ENCODE measurements at regions of chr7 and their contacts with region 1.

Region 1: GRCh38 chr7:130379921-130380860 is at the start of gene CPA1:
- DNase-seq: no peak
- H3K4me3 ChIP-seq: no peak within 1 kb of the TSS
- H3K27ac ChIP-seq: no peak within 1 kb of the TSS
- H3K4me1 ChIP-seq: peaks cover 0 to 2% (median 0%) of the 10 kb centered on the region in 4 experiments; a peak in 1 of 7 replicates
- H3K27me3 ChIP-seq: no peaks in the 10 kb centered on the region; a peak in 1 of 7 replicates
- CTCF ChIP-seq: no peak
- EP300 ChIP-seq: no peak
- POLR2A ChIP-seq: no peak
- RAD21 ChIP-seq: no peak
- total RNA-seq, gene CPA1: not detected in 2 replicates

Region 2: DNA sequence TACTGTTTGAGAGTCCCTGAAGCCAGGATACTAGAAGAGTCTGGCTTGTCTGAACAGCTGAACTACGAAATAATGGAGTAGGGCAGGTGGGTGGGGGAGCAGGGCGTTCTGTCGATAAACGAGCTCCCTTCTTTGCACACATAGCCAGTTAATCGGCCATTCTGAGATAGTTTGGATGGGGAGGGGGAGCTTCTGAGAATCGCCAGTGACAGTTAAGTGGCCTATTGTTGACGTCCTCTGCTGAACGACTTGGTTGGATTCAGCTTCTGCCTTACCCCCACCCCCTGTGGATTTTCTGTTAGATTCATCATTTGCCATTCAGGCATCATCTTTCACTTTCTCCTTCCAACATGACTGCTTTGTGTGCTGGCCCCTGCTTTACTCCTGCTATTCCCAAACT is 35.1 kb before region 1 on chr7:
- CTCF ChIA-PET with region 1: interaction called, 12 read pairs
- POLR2A ChIA-PET with region 1: no interaction called
- DNase-seq: no peak
- H3K4me3 ChIP-seq: peak overlapping the region in 1 of 4 experiments; percentile 10; a peak in 2 of 8 replicates
- H3K27ac ChIP-seq: no peak overlapping the region; the same call in 1 of the 2 replicates
- H3K4me1 ChIP-seq: peaks cover 2 to 7% (median 3%) of the 10 kb centered on the region in 4 experiments
- H3K27me3 ChIP-seq: no peaks in the 10 kb centered on the region
- CTCF ChIP-seq: no peak
- EP300 ChIP-seq: no peak
- POLR2A ChIP-seq: no peak
- RAD21 ChIP-seq: no peak

Region 3: GRCh38 chr7:130365511-130366441 is 14.4 kb before region 1 on chr7:
- CTCF ChIA-PET with region 1: interaction called, 59 read pairs
- POLR2A ChIA-PET with region 1: no interaction called
- DNase-seq: no peak
- H3K4me3 ChIP-seq: no peak overlapping the region
- H3K27ac ChIP-seq: no peak overlapping the region; the same call in 1 of the 2 replicates
- H3K4me1 ChIP-seq: peaks cover 0 to 6% (median 0%) of the 10 kb centered on the region in 4 experiments; a peak in 1 of 7 replicates
- H3K27me3 ChIP-seq: no peaks in the 10 kb centered on the region; a peak in 1 of 7 replicates
- CTCF ChIP-seq: no peak
- EP300 ChIP-seq: no peak
- POLR2A ChIP-seq: no peak
- RAD21 ChIP-seq: no peak

Region 4: GRCh38 chr7:130393101-130393561 is 12.9 kb after region 1 on chr7:
- CTCF ChIA-PET with region 1: interaction called, 12 read pairs
- POLR2A ChIA-PET with region 1: interaction called, 3 read pairs
- DNase-seq: no peak
- H3K4me3 ChIP-seq: no peak overlapping the region
- H3K27ac ChIP-seq: no peak overlapping the region
- H3K4me1 ChIP-seq: peaks cover 0 to 2% (median 0%) of the 10 kb centered on the region in 4 experiments; a peak in 2 of 7 replicates
- H3K27me3 ChIP-seq: no peaks in the 10 kb centered on the region
- CTCF ChIP-seq: no peak
- EP300 ChIP-seq: no peak
- POLR2A ChIP-seq: no peak
- RAD21 ChIP-seq: no peak

Region 5: GRCh38 chr7:130454959-130455358 is 74.8 kb after region 1 on chr7:
- CTCF ChIA-PET with region 1: no interaction called
- POLR2A ChIA-PET with region 1: no interaction called
- DNase-seq: no peak
- H3K4me3 ChIP-seq: no peak overlapping the region
- H3K27ac ChIP-seq: no peak overlapping the region
- H3K4me1 ChIP-seq: no peaks in the 10 kb centered on the region
- H3K27me3 ChIP-seq: no peaks in the 10 kb centered on the region
- CTCF ChIP-seq: no peak
- EP300 ChIP-seq: no peak
- POLR2A ChIP-seq: no peak
- RAD21 ChIP-seq: no peak

Region 6: GRCh38 chr7:130515315-130516040 is 135.3 kb after region 1 on chr7:
- CTCF ChIA-PET with region 1: no interaction called
- POLR2A ChIA-PET with region 1: no interaction called
- DNase-seq: no peak
- H3K4me3 ChIP-seq: no peak overlapping the region
- H3K27ac ChIP-seq: no peak overlapping the region
- H3K4me1 ChIP-seq: no peaks in the 10 kb centered on the region
- H3K27me3 ChIP-seq: no peaks in the 10 kb centered on the region
- CTCF ChIP-seq: no peak
- EP300 ChIP-seq: no peak
- POLR2A ChIP-seq: no peak
- RAD21 ChIP-seq: no peak